ENCODE measurements at regions of chr3 and their contacts with region 1.

Region 1: DNA sequence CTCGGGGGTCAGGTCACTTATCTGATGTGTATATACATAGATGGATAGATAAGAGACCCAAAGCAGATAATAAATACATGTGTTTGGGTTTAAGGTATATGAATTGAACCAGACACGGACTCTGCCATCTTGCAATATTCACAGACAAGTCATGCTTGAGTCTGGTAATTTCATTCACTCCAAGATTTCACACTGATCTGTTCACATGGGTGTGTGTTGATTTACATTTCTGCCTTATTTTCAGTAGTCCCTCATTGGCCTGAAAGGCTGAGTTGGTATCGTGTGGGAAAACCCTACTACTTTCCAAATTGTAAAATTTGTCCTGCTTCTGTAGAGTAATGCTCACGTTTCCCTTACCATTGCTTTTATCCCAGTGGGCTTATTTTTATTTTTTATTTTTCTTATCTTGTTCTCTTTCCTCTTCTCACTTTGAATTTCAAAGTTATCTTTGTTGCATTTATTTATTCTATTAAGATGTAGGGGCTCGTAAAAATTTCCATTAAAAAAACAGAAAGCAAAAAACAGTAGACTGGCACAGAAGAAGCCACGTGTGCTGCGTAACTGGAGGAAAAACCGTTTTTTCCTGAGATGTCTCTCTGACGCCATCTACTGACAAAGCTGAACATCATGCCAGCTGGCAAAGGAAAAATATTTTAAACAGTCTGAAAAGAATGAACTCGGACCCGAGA is 10.8 kb upstream of the MFSD1 start:
- DNase-seq: peak in 7 of 14 experiments; percentile 5 to 79 (median 49)
- ATAC-seq: peak; percentile 79
- H3K4me3 ChIP-seq: no peak overlapping the region
- H3K4me3 Mint-ChIP-seq: no peak overlapping the region
- H3K27ac ChIP-seq: no peak overlapping the region
- H3K27ac Mint-ChIP-seq: no peak overlapping the region
- H3K4me1 ChIP-seq: no peaks in the 10 kb centered on the region
- H3K4me1 Mint-ChIP-seq: no peaks in the 10 kb centered on the region
- H3K27me3 ChIP-seq: no peaks in the 10 kb centered on the region
- H3K27me3 Mint-ChIP-seq: no peaks in the 10 kb centered on the region
- CTCF ChIP-seq: peak; percentile 91

Region 2: DNA sequence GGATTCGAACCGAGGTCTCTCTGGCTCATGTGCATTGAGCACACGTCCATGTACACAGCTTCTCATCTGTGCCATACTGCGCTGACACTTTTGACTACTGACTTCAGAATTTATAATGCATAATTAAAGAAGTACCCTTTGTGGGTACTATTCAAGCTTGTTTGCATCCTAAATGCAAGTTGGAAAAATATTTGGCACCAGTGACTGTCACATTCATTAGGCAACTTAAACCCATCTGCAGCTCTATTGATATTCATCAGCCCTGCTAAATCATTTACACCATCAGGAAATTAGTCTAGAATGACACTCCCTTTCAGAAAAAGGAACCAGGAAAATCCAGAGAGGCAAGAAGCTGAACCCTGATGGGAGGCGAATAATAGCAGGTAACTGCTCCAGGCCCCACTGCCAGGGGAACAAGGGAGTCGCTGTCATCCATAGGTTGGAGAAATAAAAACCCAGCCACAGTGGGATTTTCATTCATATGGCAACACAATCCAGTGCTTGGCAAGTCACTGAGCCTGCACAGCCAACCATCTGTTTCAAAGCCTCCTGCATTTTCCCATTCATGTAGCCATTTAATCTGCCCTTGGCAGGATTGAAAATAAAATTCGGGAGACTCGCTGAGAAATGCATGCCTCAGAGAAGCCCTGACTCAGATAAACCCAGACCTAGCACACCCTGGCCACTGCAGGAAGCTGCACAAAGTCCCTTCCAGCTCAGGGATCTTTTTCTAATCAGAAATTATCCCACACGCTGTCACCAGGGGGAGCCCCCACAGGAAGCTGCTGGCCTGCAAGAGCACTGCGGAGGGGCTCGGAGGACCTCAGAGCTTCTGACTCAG is 1184.8 kb before region 1 on chr3:
- CTCF ChIA-PET with region 1: no interaction called
- POLR2A ChIA-PET with region 1: no interaction called
- intact Hi-C with region 1: loop called in 1 of 2 experiments (anchors 5 kb)
- DNase-seq: peak; percentile 20 to 69 (median 44)
- ATAC-seq: peak; percentile 82
- H3K4me3 ChIP-seq: no peak overlapping the region
- H3K4me3 Mint-ChIP-seq: no peak overlapping the region
- H3K27ac ChIP-seq: no peak overlapping the region
- H3K27ac Mint-ChIP-seq: no peak overlapping the region
- H3K4me1 ChIP-seq: peaks cover 4% of the 10 kb centered on the region
- H3K4me1 Mint-ChIP-seq: peaks cover 5% of the 10 kb centered on the region
- H3K27me3 ChIP-seq: no peaks in the 10 kb centered on the region
- H3K27me3 Mint-ChIP-seq: peaks cover 14% of the 10 kb centered on the region
- CTCF ChIP-seq: peak; percentile 80

Region 3: GRCh38 chr3:158539414-158540014 is 251.5 kb before region 1 on chr3:
- CTCF ChIA-PET with region 1: no interaction called
- POLR2A ChIA-PET with region 1: interaction called, 3 read pairs
- intact Hi-C with region 1: loop called (anchors 1 to 2 kb)
- DNase-seq: peak in 10 of 14 experiments; percentile 1 to 69 (median 16)
- ATAC-seq: peak; percentile 49
- H3K4me3 ChIP-seq: no peak overlapping the region
- H3K4me3 Mint-ChIP-seq: no peak overlapping the region
- H3K27ac ChIP-seq: no peak overlapping the region
- H3K27ac Mint-ChIP-seq: no peak overlapping the region
- H3K4me1 ChIP-seq: no peaks in the 10 kb centered on the region
- H3K4me1 Mint-ChIP-seq: no peaks in the 10 kb centered on the region
- H3K27me3 ChIP-seq: no peaks in the 10 kb centered on the region
- H3K27me3 Mint-ChIP-seq: no peaks in the 10 kb centered on the region
- CTCF ChIP-seq: peak; percentile 66

Region 4: GRCh38 chr3:158727206-158728060 is 63.6 kb before region 1 on chr3:
- CTCF ChIA-PET with region 1: interaction called, 39 read pairs
- POLR2A ChIA-PET with region 1: interaction called, 4 read pairs
- intact Hi-C with region 1: loop called (anchors 1 kb)
- DNase-seq: peak in 11 of 14 experiments; percentile 16 to 77 (median 30)
- ATAC-seq: peak; percentile 70
- H3K4me3 ChIP-seq: peak overlapping the region; percentile 33
- H3K4me3 Mint-ChIP-seq: peak overlapping the region; percentile 31
- H3K27ac ChIP-seq: no peak overlapping the region
- H3K27ac Mint-ChIP-seq: peak overlapping the region; percentile 47
- H3K4me1 ChIP-seq: peaks cover 32% of the 10 kb centered on the region
- H3K4me1 Mint-ChIP-seq: peaks cover 46% of the 10 kb centered on the region
- H3K27me3 ChIP-seq: peaks cover 0 to 4% of the 10 kb centered on the region in 2 experiments
- H3K27me3 Mint-ChIP-seq: peaks cover 16% of the 10 kb centered on the region
- CTCF ChIP-seq: peak; percentile 78

Region 5: DNA sequence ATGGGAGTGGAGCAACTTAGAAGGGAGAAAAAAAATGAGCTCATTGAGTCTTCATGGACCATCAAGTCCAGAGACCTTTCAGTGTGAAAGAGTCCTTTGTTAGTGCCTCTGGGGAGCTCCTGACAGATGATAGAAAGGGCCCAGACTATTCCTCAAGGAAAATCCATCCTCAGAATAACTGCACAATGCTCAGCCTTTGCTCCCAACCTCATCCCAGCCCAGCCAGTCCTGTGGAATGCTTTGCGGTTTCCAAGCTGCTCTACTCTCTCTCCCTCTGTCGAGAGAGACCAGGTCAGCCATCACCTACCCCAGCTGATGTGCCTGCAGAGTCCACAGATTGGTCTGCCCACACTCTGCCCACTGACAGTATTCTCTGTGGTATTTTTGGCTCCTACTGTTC is 417.0 kb after region 1 on chr3:
- CTCF ChIA-PET with region 1: no interaction called
- POLR2A ChIA-PET with region 1: no interaction called
- intact Hi-C with region 1: no loop called
- DNase-seq: no peak
- ATAC-seq: no peak
- H3K4me3 ChIP-seq: no peak overlapping the region
- H3K4me3 Mint-ChIP-seq: no peak overlapping the region
- H3K27ac ChIP-seq: no peak overlapping the region
- H3K27ac Mint-ChIP-seq: no peak overlapping the region
- H3K4me1 ChIP-seq: no peaks in the 10 kb centered on the region
- H3K4me1 Mint-ChIP-seq: no peaks in the 10 kb centered on the region
- H3K27me3 ChIP-seq: no peaks in the 10 kb centered on the region
- H3K27me3 Mint-ChIP-seq: no peaks in the 10 kb centered on the region
- CTCF ChIP-seq: no peak

Region 6: DNA sequence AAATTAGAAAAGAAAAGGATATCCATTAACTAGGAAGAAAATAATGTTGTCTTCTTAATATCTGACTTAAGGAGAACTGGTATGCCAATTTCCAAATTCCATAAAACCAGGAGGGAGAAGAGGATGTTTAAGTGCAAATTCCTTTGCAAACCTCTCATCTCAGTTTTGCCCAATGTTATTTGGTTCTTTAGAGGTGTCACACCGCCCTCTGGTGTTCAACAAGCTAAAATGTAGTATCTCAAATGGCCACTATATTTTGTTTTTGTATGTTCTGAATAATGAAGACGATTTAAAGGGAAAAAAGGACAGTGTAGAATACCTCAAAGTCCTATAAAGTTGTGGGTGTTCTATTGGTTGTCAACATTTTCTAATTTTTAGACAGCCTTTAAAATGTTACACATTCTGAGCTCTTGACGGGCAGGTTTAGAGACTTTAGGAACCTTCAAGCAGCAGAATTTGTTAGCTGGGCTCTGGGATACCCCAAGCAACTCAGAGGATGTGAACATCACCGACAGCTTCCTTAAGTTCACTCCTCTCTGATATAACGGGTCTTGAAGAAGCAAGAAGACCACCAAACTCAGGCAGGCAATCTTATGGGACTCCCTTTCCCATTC is 469.1 kb after region 1 on chr3:
- CTCF ChIA-PET with region 1: no interaction called
- POLR2A ChIA-PET with region 1: no interaction called
- intact Hi-C with region 1: loop called in 1 of 2 experiments (anchors 5 kb)
- DNase-seq: peak in 8 of 14 experiments; percentile 2 to 57 (median 22)
- ATAC-seq: no peak
- H3K4me3 ChIP-seq: no peak overlapping the region
- H3K4me3 Mint-ChIP-seq: no peak overlapping the region
- H3K27ac ChIP-seq: no peak overlapping the region
- H3K27ac Mint-ChIP-seq: no peak overlapping the region
- H3K4me1 ChIP-seq: no peaks in the 10 kb centered on the region
- H3K4me1 Mint-ChIP-seq: no peaks in the 10 kb centered on the region
- H3K27me3 ChIP-seq: no peaks in the 10 kb centered on the region
- H3K27me3 Mint-ChIP-seq: peaks cover 20% of the 10 kb centered on the region
- CTCF ChIP-seq: peak; percentile 74

Measured in CD4-positive, alpha-beta T cell (primary cell).